Head of caudate nucleus (tissue), 42 donors: ENCODE measurements at regions of chr15 and their contacts with region 1.

Region 1: GRCh38 chr15:81575436-81576123 is 201.6 kb upstream of the TMC3 start:
- DNase-seq: peak; percentile 19 to 93 (median 71)

Region 2: GRCh38 chr15:81516461-81516860 is 59.1 kb before region 1 on chr15:
- intact Hi-C with region 1: loop called (anchors 10 kb)
- DNase-seq: no peak

Region 3: GRCh38 chr15:81752546-81752942 is 177.0 kb after region 1 on chr15:
- intact Hi-C with region 1: no loop called
- DNase-seq: peak; percentile 19 to 79 (median 59)